HepG2 (cell line): ENCODE measurements at regions of chr20 and their contacts with region 1.

Region 1: GRCh38 chr20:22248051-22248667 is 336.2 kb downstream of the FOXA2 start:
- DNase-seq: peak; percentile 35
- ATAC-seq: no peak
- H3K4me3 ChIP-seq: no peak overlapping the region
- H3K27ac ChIP-seq: no peak overlapping the region
- H3K4me1 ChIP-seq: peaks cover 18% of the 10 kb centered on the region
- H3K27me3 ChIP-seq: peaks cover 1 to 22% of the 10 kb centered on the region in 2 experiments; a peak in 3 of 5 replicates
- CTCF ChIP-seq: peak; percentile 77
- EP300 ChIP-seq: no peak
- POLR2A ChIP-seq: no peak
- RAD21 ChIP-seq: peak; percentile 61; the same call in 1 of the 2 replicates

Region 2: DNA sequence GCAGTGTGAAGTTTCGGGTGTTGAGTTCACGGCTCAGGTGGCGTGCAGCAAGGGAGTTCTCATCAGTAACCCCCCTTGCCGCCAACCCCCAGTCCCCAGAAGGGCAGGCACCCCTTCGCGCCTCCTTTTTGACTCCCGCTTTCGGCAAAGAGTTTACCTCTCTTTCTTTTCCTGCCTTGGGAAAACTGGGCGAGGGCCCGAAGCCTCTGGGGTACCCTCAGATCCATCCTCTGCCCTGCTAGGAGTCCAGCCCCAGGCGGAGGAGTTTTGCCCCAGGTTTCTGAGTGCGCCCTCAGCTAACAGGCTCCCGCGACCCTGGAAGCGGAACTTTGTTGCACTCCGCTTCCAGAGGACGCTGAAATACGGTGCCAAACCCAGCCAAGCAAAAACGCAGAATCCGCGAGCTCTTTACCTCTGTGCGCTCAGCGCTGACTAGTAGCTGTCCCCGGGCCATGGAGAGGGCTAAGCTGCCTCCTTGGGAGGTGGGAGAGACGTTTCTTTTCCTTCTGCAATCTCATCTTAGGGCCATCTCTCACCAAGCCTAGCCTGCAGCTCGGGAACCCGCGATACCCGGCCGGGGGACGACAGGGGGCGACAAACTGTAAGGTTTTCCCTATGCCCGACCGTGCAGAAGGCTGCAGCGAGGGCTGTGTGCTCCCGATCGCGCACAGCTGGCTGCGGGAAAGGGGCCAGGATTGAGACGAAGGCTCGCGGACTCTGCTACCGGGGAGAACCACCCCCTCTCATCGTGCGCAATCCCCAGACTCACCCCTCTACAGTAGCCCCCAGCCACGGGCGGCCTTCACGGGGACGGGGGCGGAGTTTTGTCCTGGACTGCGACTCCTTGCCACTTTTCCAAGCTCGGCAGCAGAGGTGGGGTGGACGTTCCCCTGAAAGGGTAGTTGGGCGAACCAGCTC is 545.3 kb before region 1 on chr20:
- CTCF ChIA-PET with region 1: no interaction called
- POLR2A ChIA-PET with region 1: no interaction called
- in situ Hi-C with region 1: loop called (anchors 10 kb)
- intact Hi-C with region 1: no loop called
- DNase-seq: peak; percentile 39
- ATAC-seq: peak; percentile 91
- H3K4me3 ChIP-seq: 0 out of 6 replicates have a peak overlapping the region, but pooled peaks of 1 of the 3 experiments have one; percentile 12
- H3K27ac ChIP-seq: no peak overlapping the region
- H3K4me1 ChIP-seq: no peaks in the 10 kb centered on the region
- H3K27me3 ChIP-seq: peaks cover 26 to 87% of the 10 kb centered on the region in 2 experiments
- CTCF ChIP-seq: peak; percentile 86
- EP300 ChIP-seq: no peak
- POLR2A ChIP-seq: no peak
- RAD21 ChIP-seq: no peak

Region 3: GRCh38 chr20:21719592-21720214 is 528.5 kb before region 1 on chr20:
- CTCF ChIA-PET with region 1: interaction called, 10 read pairs
- POLR2A ChIA-PET with region 1: no interaction called
- in situ Hi-C with region 1: no loop called
- intact Hi-C with region 1: loop called (anchors 1 kb)
- DNase-seq: peak; percentile 68
- ATAC-seq: peak; percentile 58; the same call in 2 of the 3 replicates
- H3K4me3 ChIP-seq: no peak overlapping the region
- H3K27ac ChIP-seq: no peak overlapping the region
- H3K4me1 ChIP-seq: no peaks in the 10 kb centered on the region
- H3K27me3 ChIP-seq: peaks cover 1 to 35% of the 10 kb centered on the region in 2 experiments
- CTCF ChIP-seq: peak; percentile 71
- EP300 ChIP-seq: no peak
- POLR2A ChIP-seq: no peak
- RAD21 ChIP-seq: no peak

Region 4: GRCh38 chr20:21808863-21809664 is 439.1 kb before region 1 on chr20:
- CTCF ChIA-PET with region 1: interaction called, 12 read pairs
- POLR2A ChIA-PET with region 1: no interaction called
- in situ Hi-C with region 1: loop called (anchors 5 kb)
- intact Hi-C with region 1: no loop called
- DNase-seq: peak; percentile 31
- ATAC-seq: peak; percentile 92
- H3K4me3 ChIP-seq: no peak overlapping the region
- H3K27ac ChIP-seq: no peak overlapping the region
- H3K4me1 ChIP-seq: no peaks in the 10 kb centered on the region
- H3K27me3 ChIP-seq: peaks cover 3 to 10% of the 10 kb centered on the region in 2 experiments; a peak in 2 of 5 replicates
- CTCF ChIP-seq: peak; percentile 94
- EP300 ChIP-seq: no peak
- POLR2A ChIP-seq: no peak
- RAD21 ChIP-seq: peak; percentile 83

Region 5: DNA sequence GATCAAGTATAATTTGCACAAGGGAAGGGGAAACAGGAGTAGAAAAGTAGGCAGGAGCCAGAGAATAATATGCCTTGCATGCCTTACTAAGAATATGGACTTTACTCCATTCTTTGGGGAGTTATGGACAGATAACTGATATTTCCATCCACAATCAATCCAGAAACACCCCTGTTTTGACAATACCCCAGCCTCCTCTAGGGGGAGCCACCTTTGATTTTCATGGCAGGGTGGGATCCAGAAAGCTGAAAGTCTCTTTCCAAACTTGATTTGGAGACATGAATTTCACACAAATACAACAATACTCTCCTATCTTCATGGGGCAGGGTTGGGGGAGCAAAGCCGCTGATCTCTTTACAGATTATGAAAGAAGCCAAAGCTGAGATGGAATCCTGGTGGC is 67.9 kb before region 1 on chr20:
- CTCF ChIA-PET with region 1: interaction called, 4 read pairs
- POLR2A ChIA-PET with region 1: no interaction called
- in situ Hi-C with region 1: no loop called
- intact Hi-C with region 1: loop called (anchors 2 kb)
- DNase-seq: peak; percentile 16
- ATAC-seq: peak; percentile 57; the same call in 2 of the 3 replicates
- H3K4me3 ChIP-seq: no peak overlapping the region
- H3K27ac ChIP-seq: no peak overlapping the region
- H3K4me1 ChIP-seq: no peaks in the 10 kb centered on the region
- H3K27me3 ChIP-seq: no peaks in the 10 kb centered on the region
- CTCF ChIP-seq: peak; percentile 60
- EP300 ChIP-seq: no peak
- POLR2A ChIP-seq: no peak
- RAD21 ChIP-seq: no peak